ENCODE measurements at regions of chr3 and their contacts with region 1.

Region 1: GRCh38 chr3:122679085-122679881 is 1.4 kb upstream of the PARP14 start:
- DNase-seq: peak; percentile 75 to 94
- ATAC-seq: peak; percentile 65 to 75 (median 65)
- H3K4me3 ChIP-seq: peak overlapping the region; percentile 98
- H3K4me3 Mint-ChIP-seq: peak overlapping the region; percentile 90
- H3K27ac ChIP-seq: peak overlapping the region; percentile 96
- H3K27ac Mint-ChIP-seq: peak overlapping the region; percentile 84 to 99
- H3K4me1 ChIP-seq: peaks cover 40% of the 10 kb centered on the region
- H3K4me1 Mint-ChIP-seq: peaks cover 50 to 52% of the 10 kb centered on the region in 2 donors
- H3K27me3 ChIP-seq: no peaks in the 10 kb centered on the region
- H3K27me3 Mint-ChIP-seq: no peaks in the 10 kb centered on the region
- CTCF ChIP-seq: peak; percentile 82

Region 2: DNA sequence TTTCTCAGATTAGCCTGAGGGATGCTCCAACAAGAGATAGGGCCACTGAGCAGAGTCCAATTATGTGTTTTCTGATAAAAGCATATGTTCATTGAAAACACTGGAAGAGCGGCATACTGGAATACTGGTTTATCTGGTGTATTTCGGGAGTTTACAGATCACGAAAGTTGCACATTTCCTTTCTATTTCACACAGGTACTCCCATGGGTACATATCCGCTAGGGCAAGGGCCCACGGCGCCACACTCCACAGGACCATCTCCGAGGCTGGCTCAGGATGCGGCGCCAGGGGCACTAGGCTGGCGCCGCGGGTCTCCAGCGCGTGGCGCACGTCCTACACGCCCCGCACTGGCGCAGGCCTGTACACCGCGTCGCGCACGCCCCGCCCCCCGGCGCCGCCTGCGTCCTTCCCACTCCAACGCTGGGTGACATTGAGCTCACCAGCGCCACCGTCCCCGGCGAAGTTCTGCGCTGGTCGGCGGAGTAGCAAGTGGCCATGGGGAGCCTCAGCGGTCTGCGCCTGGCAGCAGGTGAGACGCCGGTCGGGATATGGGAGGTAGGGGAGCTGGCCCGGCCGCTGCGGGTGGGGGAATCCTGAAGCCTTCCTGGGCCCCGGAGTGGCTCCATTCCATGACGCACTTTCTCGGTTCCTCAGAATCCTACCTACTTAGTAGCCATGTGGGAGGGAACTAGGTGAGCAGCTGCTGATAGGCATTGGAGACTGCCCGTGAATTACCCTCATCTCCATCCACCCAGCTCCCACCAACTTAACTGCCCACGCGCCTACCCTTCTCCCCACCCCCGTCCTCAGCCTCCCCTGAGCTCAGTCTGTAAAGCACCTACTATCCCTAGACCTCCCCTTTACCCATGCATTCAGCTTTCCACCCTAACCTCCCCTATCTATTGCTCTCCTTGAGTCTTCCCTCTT is 295.2 kb before region 1 on chr3 and contains the start of gene FAM162A:
- intact Hi-C with region 1: loop called (anchors 2 kb)
- DNase-seq: peak; percentile 88 to 97
- ATAC-seq: peak; percentile 93 to 99 (median 95)
- H3K4me3 ChIP-seq: peak within 1 kb of the TSS; percentile 87
- H3K4me3 Mint-ChIP-seq: peak within 1 kb of the TSS; percentile 91
- H3K27ac ChIP-seq: peak within 1 kb of the TSS; percentile 74
- H3K27ac Mint-ChIP-seq: peak within 1 kb of the TSS; percentile 86 to 89
- H3K4me1 ChIP-seq: peaks cover 15% of the 10 kb centered on the region
- H3K4me1 Mint-ChIP-seq: peaks cover 23% of the 10 kb centered on the region in 2 donors
- H3K27me3 ChIP-seq: no peaks in the 10 kb centered on the region
- H3K27me3 Mint-ChIP-seq: no peaks in the 10 kb centered on the region
- CTCF ChIP-seq: peak; percentile 63
- total RNA-seq, gene FAM162A: 12.2 to 18.4 (median 16.3) TPM

Region 3: DNA sequence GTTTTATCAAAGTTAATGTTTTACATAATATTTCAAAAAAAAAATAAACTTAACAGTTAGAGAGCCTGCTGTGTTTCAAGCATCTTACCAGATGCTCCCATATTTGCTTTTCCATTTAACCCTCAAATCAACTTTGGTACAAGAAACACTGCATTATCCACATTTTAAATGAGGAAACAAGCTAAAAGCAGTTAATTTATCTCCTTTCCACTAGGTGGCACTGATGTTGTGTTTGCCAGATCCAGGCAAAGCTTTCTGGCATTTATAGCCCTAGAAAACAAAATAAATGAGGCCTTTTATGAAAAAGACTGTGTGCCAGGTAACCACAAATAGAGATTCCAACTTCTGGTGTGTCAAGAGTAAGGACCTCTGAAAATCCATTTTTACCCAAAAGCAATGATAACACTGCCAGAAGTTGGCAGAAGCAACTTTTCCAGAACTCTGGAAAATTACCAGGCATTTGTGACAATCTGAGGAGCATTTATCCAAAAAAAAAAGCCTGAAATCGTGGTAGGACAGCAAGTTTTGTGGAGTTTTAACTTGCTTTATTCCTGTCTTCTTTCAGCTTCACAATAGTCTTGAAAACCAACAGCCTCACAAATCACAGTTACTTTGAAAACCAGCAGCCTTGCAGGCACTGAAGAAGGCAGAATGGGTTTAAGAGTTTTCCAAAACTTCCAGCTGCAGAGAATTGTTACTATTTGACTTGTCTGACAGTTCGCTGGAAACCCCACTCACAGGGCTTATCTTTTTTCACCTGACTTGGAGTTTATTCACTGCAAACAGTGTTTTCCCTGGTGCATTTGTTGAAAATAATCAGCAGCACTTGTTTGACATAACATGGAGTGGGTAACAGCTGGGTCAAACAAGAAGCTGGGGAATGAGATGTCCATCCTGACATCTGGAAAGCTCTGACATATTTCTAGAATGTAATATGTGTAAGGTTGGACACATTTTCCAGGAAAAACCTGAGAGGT is 286.1 kb before region 1 on chr3:
- intact Hi-C with region 1: loop called (anchors 1 kb)
- DNase-seq: peak in 1 of 2 donors; percentile 69
- ATAC-seq: peak; percentile 57 to 76 (median 65)
- H3K4me3 ChIP-seq: no peak overlapping the region
- H3K4me3 Mint-ChIP-seq: no peak overlapping the region
- H3K27ac ChIP-seq: no peak overlapping the region
- H3K27ac Mint-ChIP-seq: no peak overlapping the region
- H3K4me1 ChIP-seq: no peaks in the 10 kb centered on the region
- H3K4me1 Mint-ChIP-seq: peaks cover 3 to 5% of the 10 kb centered on the region in 2 donors
- H3K27me3 ChIP-seq: no peaks in the 10 kb centered on the region
- H3K27me3 Mint-ChIP-seq: no peaks in the 10 kb centered on the region
- CTCF ChIP-seq: peak; percentile 76

Region 4: DNA sequence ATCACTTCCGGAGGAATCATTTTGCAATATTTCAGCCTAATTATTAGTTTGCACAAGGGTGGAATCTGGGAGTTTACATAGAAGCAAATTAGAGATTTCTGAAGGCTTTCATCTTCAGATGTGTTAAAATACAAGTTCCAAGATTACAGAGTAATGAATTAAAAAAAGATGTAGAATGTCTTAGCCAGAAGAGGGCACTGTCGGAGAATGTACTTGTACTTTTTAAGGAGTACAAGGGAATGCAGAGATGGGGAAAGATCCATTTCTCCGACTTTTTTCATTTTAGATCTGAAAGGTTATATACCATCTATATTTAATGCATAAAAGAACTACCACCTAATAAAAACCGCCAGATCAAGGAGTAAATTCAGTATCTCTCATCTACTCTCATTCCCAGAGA is 220.3 kb before region 1 on chr3:
- intact Hi-C with region 1: loop called (anchors 2 kb)
- DNase-seq: peak in 1 of 2 donors; percentile 28
- ATAC-seq: peak in 1 of 3 donors; percentile 34
- H3K4me3 ChIP-seq: no peak overlapping the region
- H3K4me3 Mint-ChIP-seq: no peak overlapping the region
- H3K27ac ChIP-seq: no peak overlapping the region
- H3K27ac Mint-ChIP-seq: peak overlapping the region; percentile 8 to 39
- H3K4me1 ChIP-seq: no peaks in the 10 kb centered on the region
- H3K4me1 Mint-ChIP-seq: peaks cover 0 to 13% of the 10 kb centered on the region in 2 donors
- H3K27me3 ChIP-seq: no peaks in the 10 kb centered on the region
- H3K27me3 Mint-ChIP-seq: no peaks in the 10 kb centered on the region
- CTCF ChIP-seq: peak; percentile 44

Region 5: GRCh38 chr3:123201566-123202427 is 522.5 kb after region 1 on chr3 and contains the start of gene SEC22A:
- intact Hi-C with region 1: loop called (anchors 5 kb)
- DNase-seq: peak; percentile 91 to 98
- ATAC-seq: peak; percentile 93 to 98 (median 93)
- H3K4me3 ChIP-seq: peak within 1 kb of the TSS; percentile 87
- H3K4me3 Mint-ChIP-seq: peak within 1 kb of the TSS; percentile 95
- H3K27ac ChIP-seq: peak within 1 kb of the TSS; percentile 95
- H3K27ac Mint-ChIP-seq: peak within 1 kb of the TSS; percentile 96 to 98
- H3K4me1 ChIP-seq: peaks cover 15% of the 10 kb centered on the region
- H3K4me1 Mint-ChIP-seq: peaks cover 22 to 26% of the 10 kb centered on the region in 2 donors
- H3K27me3 ChIP-seq: no peaks in the 10 kb centered on the region
- H3K27me3 Mint-ChIP-seq: peaks cover 0 to 3% of the 10 kb centered on the region in 2 donors
- CTCF ChIP-seq: no peak
- total RNA-seq, gene SEC22A: 16.4 to 21.2 (median 17.0) TPM

Measured in natural killer cell (primary cell).